Ascending aorta (tissue), 2 donors: ENCODE measurements at regions of chr1 and their contacts with region 1.

Region 1: GRCh38 chr1:12314333-12314903 is 84.6 kb downstream of the VPS13D start:
- DNase-seq: no peak
- H3K4me3 ChIP-seq: no peak overlapping the region
- H3K27ac ChIP-seq: peak overlapping the region; percentile 45 to 88
- H3K4me1 ChIP-seq: peaks cover 8 to 31% of the 10 kb centered on the region in 2 donors
- H3K27me3 ChIP-seq: no peaks in the 10 kb centered on the region
- CTCF ChIP-seq: peak; percentile 39 to 52 (median 42)

Region 2: GRCh38 chr1:12407050-12407961 is 92.9 kb after region 1 on chr1:
- intact Hi-C with region 1: loop called (anchors 5 kb)
- DNase-seq: no peak
- H3K4me3 ChIP-seq: no peak overlapping the region
- H3K27ac ChIP-seq: peak overlapping the region; percentile 75 to 83
- H3K4me1 ChIP-seq: peaks cover 19 to 51% of the 10 kb centered on the region in 2 donors
- H3K27me3 ChIP-seq: no peaks in the 10 kb centered on the region
- CTCF ChIP-seq: peak; percentile 40 to 52 (median 49)

Region 3: DNA sequence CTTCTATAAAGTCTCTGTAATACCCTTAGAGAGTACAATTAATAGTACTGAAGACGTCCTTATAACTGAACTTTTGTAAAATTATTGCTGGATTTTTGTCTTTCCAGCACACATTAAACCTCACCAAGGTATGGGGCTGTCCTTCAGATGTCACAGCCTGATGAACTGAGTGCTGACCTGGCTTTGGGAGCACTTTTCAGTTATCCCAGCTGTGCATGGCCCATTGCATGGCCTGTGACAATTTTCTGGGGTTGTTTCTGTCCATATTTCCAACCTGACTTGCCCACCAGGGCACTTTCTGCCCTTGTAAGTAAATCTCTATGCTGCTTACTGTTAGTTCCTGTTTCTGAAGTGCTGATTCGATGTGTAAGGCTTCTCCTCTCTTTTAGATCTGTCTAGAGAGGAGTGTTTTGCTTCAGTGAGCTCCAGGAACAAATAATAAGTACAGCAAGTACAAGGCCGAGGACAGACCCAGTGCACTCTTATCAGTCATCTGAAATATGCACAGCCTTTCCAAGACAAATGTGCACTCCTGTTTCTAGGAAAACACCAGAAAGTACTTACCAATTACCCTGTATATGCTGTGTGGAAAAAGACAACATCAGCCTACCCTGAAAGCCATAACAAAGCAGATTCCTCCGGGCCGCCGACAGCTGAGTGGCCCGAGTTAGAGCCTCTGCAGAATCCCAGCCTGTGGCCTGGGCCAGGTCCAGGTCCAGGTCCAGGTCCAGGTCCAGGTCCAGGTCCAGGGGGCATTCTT is 181.9 kb after region 1 on chr1:
- intact Hi-C with region 1: loop called (anchors 5 kb)
- DNase-seq: no peak
- H3K4me3 ChIP-seq: no peak overlapping the region
- H3K27ac ChIP-seq: peak overlapping the region; percentile 79 to 82
- H3K4me1 ChIP-seq: peaks cover 4 to 28% of the 10 kb centered on the region in 2 donors
- H3K27me3 ChIP-seq: no peaks in the 10 kb centered on the region
- CTCF ChIP-seq: no peak

Region 4: DNA sequence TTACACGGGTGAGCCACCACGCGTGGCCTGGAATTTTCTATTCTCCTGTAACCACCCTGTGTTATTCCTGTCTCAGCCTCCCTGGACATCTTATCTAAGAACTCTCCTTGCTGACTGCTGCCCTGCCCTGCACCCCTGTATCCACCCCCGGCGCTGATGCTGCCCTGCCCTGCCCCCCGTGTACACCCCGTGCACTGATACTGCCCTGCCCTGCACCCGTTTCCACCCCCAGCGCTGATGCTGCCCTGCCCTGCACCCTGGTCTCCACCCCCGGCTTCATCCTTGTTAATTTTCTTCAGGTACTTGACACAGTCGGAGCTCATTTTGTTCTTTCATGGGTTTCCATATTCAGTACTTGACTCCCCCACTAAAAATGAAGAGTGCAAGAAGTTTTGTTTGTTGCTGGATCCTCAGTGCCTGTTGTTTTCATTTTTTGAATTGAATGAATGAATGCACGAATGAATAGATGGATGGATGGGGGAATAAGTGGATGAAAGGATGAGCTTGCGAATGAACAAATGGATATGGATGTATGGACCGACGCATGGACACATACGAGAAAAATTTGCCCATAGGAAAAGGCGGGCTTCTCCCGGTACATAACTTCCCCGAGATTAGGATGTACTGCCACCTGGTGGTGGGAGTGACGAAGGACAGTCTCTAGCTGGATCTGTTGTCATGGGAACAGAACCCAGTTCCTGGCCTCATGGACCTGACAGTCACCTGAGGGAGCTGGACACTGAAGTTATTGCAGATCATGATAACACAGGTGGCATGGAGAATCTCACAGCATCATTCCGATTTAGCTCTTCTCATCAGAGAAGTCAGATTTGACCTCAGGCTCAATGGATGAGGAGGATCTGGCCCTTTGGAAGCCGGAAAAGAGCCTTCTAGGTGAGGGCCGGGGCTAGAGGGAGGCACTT is 344.4 kb after region 1 on chr1:
- intact Hi-C with region 1: loop called (anchors 2 kb)
- DNase-seq: peak in 1 of 2 donors; percentile 85
- H3K4me3 ChIP-seq: no peak overlapping the region
- H3K27ac ChIP-seq: no peak overlapping the region
- H3K4me1 ChIP-seq: no peaks in the 10 kb centered on the region
- H3K27me3 ChIP-seq: no peaks in the 10 kb centered on the region
- CTCF ChIP-seq: peak; percentile 88 to 95 (median 95)